B cell (primary cell): ENCODE measurements at regions of chr16 and their contacts with region 1.

Region 1: GRCh38 chr16:30355144-30355894 is at the start of gene CD2BP2:
- DNase-seq: peak; percentile 95
- ATAC-seq: peak; percentile 88
- H3K4me3 ChIP-seq: peak within 1 kb of the TSS; percentile 82 to 99 (median 92)
- H3K4me3 Mint-ChIP-seq: peak within 1 kb of the TSS; percentile 92
- H3K27ac ChIP-seq: peak within 1 kb of the TSS; percentile 84 to 94
- H3K27ac Mint-ChIP-seq: peak within 1 kb of the TSS; percentile 95
- H3K4me1 ChIP-seq: peaks cover 20 to 34% of the 10 kb centered on the region in 2 donors
- H3K4me1 Mint-ChIP-seq: peaks cover 42% of the 10 kb centered on the region
- H3K27me3 ChIP-seq: no peaks in the 10 kb centered on the region
- H3K27me3 Mint-ChIP-seq: no peaks in the 10 kb centered on the region
- CTCF ChIP-seq: no peak
- total RNA-seq, gene CD2BP2: 80.1 and 82.0 TPM in 2 replicates

Region 2: DNA sequence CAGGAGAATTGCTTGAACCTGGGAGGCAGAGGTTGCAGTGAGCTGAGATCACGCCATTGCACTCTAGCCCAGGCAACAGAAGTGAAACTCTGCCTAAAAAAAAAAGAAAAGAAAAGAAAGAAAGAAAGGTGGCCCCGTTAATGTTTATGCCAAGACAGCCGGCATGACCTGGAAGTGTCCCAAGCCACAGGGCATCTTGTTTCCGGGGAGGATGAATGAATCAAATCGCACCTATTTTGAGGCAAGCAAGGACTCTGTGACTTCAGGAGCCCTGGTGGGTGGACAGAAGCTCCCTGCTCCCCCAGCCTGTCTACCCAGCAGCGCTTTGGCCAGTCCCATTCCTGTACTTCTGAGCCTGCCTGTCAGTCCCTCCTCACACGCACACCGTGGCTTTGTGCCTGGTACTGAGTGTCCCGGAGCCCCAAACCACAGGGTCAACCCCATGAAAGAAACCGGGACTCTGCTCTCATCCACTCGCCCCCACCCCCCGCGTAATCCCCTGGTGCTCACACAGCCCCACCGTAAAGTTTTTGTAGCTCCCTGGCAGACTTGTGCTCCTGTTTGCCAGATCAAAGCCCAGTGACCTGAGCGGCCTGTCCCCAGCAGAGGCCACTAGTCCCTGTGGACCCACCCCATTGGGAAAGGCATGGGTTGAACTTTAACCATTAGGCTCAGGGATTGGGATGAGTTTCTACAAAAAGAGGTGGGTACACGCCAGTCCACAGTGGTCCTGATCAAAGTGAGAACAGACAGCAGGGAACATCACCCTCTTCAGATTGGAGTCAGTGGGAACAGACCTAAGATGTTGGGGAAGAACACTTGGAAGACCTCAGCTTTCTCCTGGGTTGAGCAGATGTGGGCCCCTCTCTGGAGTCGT is 19.5 kb before region 1 on chr16:
- CTCF ChIA-PET with region 1: no interaction called
- POLR2A ChIA-PET with region 1: interaction called, 11 read pairs
- intact Hi-C with region 1: loop called (anchors 1 kb)
- DNase-seq: peak; percentile 80
- ATAC-seq: no peak
- H3K4me3 ChIP-seq: peak overlapping the region in 4 of 5 experiments; percentile 62 to 73 (median 68)
- H3K4me3 Mint-ChIP-seq: peak overlapping the region; percentile 85
- H3K27ac ChIP-seq: peak overlapping the region; percentile 59 to 76
- H3K27ac Mint-ChIP-seq: peak overlapping the region; percentile 91
- H3K4me1 ChIP-seq: peaks cover 16 to 23% of the 10 kb centered on the region in 2 donors
- H3K4me1 Mint-ChIP-seq: peaks cover 28% of the 10 kb centered on the region
- H3K27me3 ChIP-seq: no peaks in the 10 kb centered on the region
- H3K27me3 Mint-ChIP-seq: no peaks in the 10 kb centered on the region
- CTCF ChIP-seq: no peak

Region 3: GRCh38 chr16:30395155-30395991 is 40.1 kb after region 1 on chr16 and contains the start of gene ZNF48:
- CTCF ChIA-PET with region 1: no interaction called
- POLR2A ChIA-PET with region 1: interaction called, 4 read pairs
- intact Hi-C with region 1: loop called (anchors 1 kb)
- DNase-seq: peak; percentile 87
- ATAC-seq: peak; percentile 95
- H3K4me3 ChIP-seq: peak within 1 kb of the TSS; percentile 32 to 75 (median 66)
- H3K4me3 Mint-ChIP-seq: peak within 1 kb of the TSS; percentile 92
- H3K27ac ChIP-seq: peak within 1 kb of the TSS in 1 of 2 donors; percentile 64
- H3K27ac Mint-ChIP-seq: peak within 1 kb of the TSS; percentile 91
- H3K4me1 ChIP-seq: peaks cover 13 to 31% of the 10 kb centered on the region in 2 donors
- H3K4me1 Mint-ChIP-seq: peaks cover 23% of the 10 kb centered on the region
- H3K27me3 ChIP-seq: no peaks in the 10 kb centered on the region
- H3K27me3 Mint-ChIP-seq: no peaks in the 10 kb centered on the region
- CTCF ChIP-seq: peak; percentile 26
- total RNA-seq, gene ZNF48: 13.3 and 14.2 TPM in 2 replicates

Region 4: GRCh38 chr16:30429678-30430427 is 74.5 kb after region 1 on chr16 and contains the start of gene DCTPP1:
- CTCF ChIA-PET with region 1: no interaction called
- POLR2A ChIA-PET with region 1: no interaction called
- intact Hi-C with region 1: no loop called
- DNase-seq: peak; percentile 99
- ATAC-seq: peak; percentile 97
- H3K4me3 ChIP-seq: peak within 1 kb of the TSS; percentile 78 to 98 (median 85)
- H3K4me3 Mint-ChIP-seq: no peak within 1 kb of the TSS
- H3K27ac ChIP-seq: peak within 1 kb of the TSS; percentile 79 to 86
- H3K27ac Mint-ChIP-seq: peak within 1 kb of the TSS; percentile 20
- H3K4me1 ChIP-seq: peaks cover 12 to 21% of the 10 kb centered on the region in 2 donors
- H3K4me1 Mint-ChIP-seq: peaks cover 17% of the 10 kb centered on the region
- H3K27me3 ChIP-seq: no peaks in the 10 kb centered on the region
- H3K27me3 Mint-ChIP-seq: no peaks in the 10 kb centered on the region
- CTCF ChIP-seq: peak; percentile 82
- total RNA-seq, gene DCTPP1: 25.0 and 28.9 TPM in 2 replicates